ENCODE measurements at regions of chr2 and their contacts with region 1.

Region 1: GRCh38 chr2:112481050-112481527 is 867 bp upstream of the TTL start:
- DNase-seq: no peak
- H3K4me3 ChIP-seq: peak overlapping the region; percentile 88
- H3K27me3 ChIP-seq: no peaks in the 10 kb centered on the region
- CTCF ChIP-seq: peak; percentile 94

Region 2: DNA sequence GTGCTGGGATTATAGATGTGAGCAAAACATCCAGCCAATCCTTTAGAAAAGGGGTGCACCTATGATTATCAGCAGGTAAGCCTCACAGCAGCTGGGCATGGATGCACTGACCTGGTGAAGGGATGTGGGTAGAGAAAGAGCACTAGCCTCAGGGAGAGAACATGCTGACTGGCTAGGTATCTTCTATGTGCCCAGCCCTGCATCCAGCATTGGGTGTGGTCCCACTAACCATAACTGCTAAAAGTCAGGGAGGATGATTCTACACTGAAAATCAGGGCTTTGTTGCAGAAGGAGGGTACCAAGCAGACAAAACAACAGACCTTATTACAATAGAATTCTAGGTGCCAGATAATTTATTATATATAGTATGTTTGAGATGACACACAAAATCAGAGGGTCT is 26.5 kb before region 1 on chr2:
- CTCF ChIA-PET with region 1: interaction called, 4 read pairs
- POLR2A ChIA-PET with region 1: interaction called, 12 read pairs
- DNase-seq: no peak
- H3K4me3 ChIP-seq: no peak overlapping the region
- H3K27me3 ChIP-seq: peaks cover 6% of the 10 kb centered on the region; the same call in 1 of the 2 replicates
- CTCF ChIP-seq: no peak

Region 3: GRCh38 chr2:112584134-112584890 is 103.2 kb after region 1 on chr2 and contains the start of gene CHCHD5:
- CTCF ChIA-PET with region 1: interaction called, 11 read pairs
- POLR2A ChIA-PET with region 1: no interaction called
- DNase-seq: peak; percentile 79
- H3K4me3 ChIP-seq: peak within 1 kb of the TSS; percentile 69
- H3K27me3 ChIP-seq: no peaks in the 10 kb centered on the region
- CTCF ChIP-seq: peak; percentile 16; the same call in 1 of the 2 replicates
- polyA plus RNA-seq, gene CHCHD5: 8.1 and 14.9 TPM in 2 replicates